ENCODE measurements at regions of chr6 and their contacts with region 1.

Region 1: GRCh38 chr6:17584241-17584803 is 15.8 kb upstream of the FAM8A1 start:
- DNase-seq: no peak
- H3K4me3 ChIP-seq: no peak overlapping the region
- H3K27ac ChIP-seq: no peak overlapping the region
- H3K4me1 ChIP-seq: peaks cover 4% of the 10 kb centered on the region
- H3K27me3 ChIP-seq: no peaks in the 10 kb centered on the region
- CTCF ChIP-seq: peak; percentile 72

Region 2: DNA sequence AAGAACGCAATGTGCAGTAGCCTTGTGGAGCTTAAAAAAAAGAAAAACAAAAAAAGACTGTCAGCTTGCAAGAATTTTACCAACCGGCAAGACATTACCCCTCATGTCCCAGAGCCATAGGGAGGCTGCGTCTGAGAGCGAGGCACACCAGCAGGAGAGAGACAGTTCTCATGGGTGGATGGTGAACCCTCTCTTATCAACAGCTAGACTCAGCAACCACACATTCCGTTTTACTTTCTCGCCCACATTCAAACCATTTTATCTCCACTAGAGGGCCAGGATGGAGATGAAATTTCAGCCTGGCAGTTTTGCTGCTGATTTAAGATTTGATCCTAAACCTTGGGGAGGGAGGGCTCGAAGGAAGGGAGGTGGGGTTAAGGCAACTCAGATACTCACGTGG is 1070.1 kb before region 1 on chr6:
- intact Hi-C with region 1: no loop called
- DNase-seq: no peak
- H3K4me3 ChIP-seq: no peak overlapping the region
- H3K27ac ChIP-seq: no peak overlapping the region
- H3K4me1 ChIP-seq: peaks cover 3% of the 10 kb centered on the region
- H3K27me3 ChIP-seq: no peaks in the 10 kb centered on the region
- CTCF ChIP-seq: peak; percentile 18

Region 3: DNA sequence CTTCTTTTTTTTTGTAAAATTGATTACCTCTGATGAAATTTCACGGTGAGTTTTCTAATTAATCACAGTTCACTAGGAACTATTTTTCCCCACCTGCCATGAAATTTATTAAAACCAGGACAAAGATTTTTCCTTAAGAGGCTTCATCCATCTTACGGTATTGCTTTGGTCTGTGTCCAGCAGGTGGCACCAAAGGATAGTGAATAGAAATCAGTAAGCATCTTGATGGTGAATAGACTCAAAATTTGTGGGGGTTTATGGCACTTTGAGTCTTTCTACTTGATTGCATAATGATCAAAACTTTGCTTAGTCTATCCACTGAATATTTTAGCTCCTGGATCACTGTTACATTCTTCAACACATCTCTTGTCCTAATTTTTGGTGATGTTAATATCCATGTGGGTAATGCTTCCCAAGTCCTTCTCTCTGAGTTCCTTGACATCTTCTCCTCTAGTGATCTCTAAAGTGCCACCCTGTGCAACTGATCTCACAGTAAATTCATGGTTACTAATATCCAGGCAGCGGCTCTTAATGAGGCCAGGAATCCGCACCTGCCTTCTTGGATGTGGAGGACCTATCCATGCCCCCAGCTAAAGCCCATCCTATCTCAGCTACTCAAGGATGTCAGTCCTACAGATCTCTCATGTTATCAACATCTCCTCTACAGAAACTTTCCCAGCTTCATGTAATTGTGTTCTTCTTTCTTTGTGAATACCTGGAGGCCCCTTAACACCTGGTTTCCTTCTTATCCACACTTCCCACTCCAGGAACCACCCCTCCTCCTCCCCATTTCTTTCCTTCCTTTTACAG is 428.0 kb before region 1 on chr6:
- intact Hi-C with region 1: loop called (anchors 2 kb)
- DNase-seq: peak; percentile 84
- H3K4me3 ChIP-seq: no peak overlapping the region
- H3K27ac ChIP-seq: no peak overlapping the region
- H3K4me1 ChIP-seq: no peaks in the 10 kb centered on the region
- H3K27me3 ChIP-seq: no peaks in the 10 kb centered on the region
- CTCF ChIP-seq: peak; percentile 86

Region 4: DNA sequence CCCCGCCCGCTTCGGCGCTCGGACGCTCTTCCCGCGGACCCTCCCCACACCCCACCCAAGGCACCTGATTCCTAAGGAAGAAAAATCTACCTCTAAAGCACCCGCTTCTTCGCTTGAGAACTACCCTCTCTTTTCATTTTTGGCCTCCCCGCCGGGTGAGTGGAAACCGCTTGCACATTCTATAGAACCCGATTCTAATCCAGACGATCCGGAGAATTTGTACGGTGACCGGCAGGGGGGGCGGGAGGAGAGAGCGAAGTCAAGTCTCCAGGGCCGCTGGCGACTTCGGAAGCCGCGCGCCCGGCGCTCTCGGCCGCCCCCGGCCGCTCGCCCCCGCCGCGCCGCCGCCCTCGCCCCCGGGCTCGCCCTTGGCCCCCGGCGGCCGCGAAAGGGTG is 303.2 kb before region 1 on chr6 and contains the start of gene RBM24:
- intact Hi-C with region 1: loop called (anchors 5 kb)
- DNase-seq: peak; percentile 86
- H3K4me3 ChIP-seq: peak within 1 kb of the TSS; percentile 77
- H3K27ac ChIP-seq: peak within 1 kb of the TSS; percentile 24
- H3K4me1 ChIP-seq: no peaks in the 10 kb centered on the region
- H3K27me3 ChIP-seq: no peaks in the 10 kb centered on the region
- CTCF ChIP-seq: no peak
- total RNA-seq, gene RBM24: 2.8 to 4.9 TPM

Region 5: GRCh38 chr6:17469006-17469832 is 115.1 kb before region 1 on chr6:
- intact Hi-C with region 1: loop called (anchors 10 kb)
- DNase-seq: no peak
- H3K4me3 ChIP-seq: no peak overlapping the region
- H3K27ac ChIP-seq: no peak overlapping the region
- H3K4me1 ChIP-seq: peaks cover 5% of the 10 kb centered on the region
- H3K27me3 ChIP-seq: no peaks in the 10 kb centered on the region
- CTCF ChIP-seq: no peak

Region 6: DNA sequence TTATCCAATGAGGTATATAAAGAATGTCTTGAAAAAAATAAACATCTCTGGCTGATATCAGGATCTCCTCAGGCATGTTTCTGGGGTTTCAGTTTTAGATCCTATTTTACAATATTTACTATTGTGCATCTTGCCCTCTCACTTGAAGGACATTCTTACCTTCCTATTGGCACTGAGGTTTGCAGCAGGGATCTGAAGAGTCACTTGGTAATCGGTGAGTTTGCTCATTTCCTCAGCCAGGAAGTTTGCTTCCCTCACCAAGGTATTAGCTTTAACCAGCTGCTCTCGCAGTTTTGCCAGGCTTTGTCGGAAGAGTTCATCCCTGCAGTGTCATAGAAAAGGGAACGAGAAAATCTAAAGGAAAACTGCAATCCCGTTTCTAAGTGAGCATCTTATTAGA is 224.3 kb after region 1 on chr6:
- intact Hi-C with region 1: loop called (anchors 10 kb)
- DNase-seq: no peak
- H3K4me3 ChIP-seq: no peak overlapping the region
- H3K27ac ChIP-seq: no peak overlapping the region
- H3K4me1 ChIP-seq: no peaks in the 10 kb centered on the region
- H3K27me3 ChIP-seq: no peaks in the 10 kb centered on the region
- CTCF ChIP-seq: no peak

Measured in colonic mucosa (tissue), 4 donors.